PC-3 (cell line): ENCODE measurements at regions of chrX and their contacts with region 1.

Region 1: GRCh38 chrX:88526385-88526784 is 220.6 kb upstream of the CPXCR1 start:
- DNase-seq: peak; percentile 36
- ATAC-seq: peak; percentile 75
- H3K4me3 ChIP-seq: no peak overlapping the region
- H3K27ac ChIP-seq: no peak overlapping the region
- H3K4me1 ChIP-seq: no peaks in the 10 kb centered on the region
- H3K27me3 ChIP-seq: no peaks in the 10 kb centered on the region
- CTCF ChIP-seq: no peak

Region 2: GRCh38 chrX:88425739-88426138 is 100.6 kb before region 1 on chrX:
- CTCF ChIA-PET with region 1: no interaction called
- POLR2A ChIA-PET with region 1: no interaction called
- intact Hi-C with region 1: no loop called
- DNase-seq: peak; percentile 53
- ATAC-seq: peak; percentile 58
- H3K4me3 ChIP-seq: peak overlapping the region; percentile 71
- H3K27ac ChIP-seq: peak overlapping the region; percentile 30; the same call in 1 of the 2 replicates
- H3K4me1 ChIP-seq: no peaks in the 10 kb centered on the region
- H3K27me3 ChIP-seq: no peaks in the 10 kb centered on the region
- CTCF ChIP-seq: peak; percentile 68

Region 3: GRCh38 chrX:88584283-88584682 is 57.9 kb after region 1 on chrX:
- CTCF ChIA-PET with region 1: no interaction called
- POLR2A ChIA-PET with region 1: no interaction called
- intact Hi-C with region 1: no loop called
- DNase-seq: no peak
- ATAC-seq: no peak
- H3K4me3 ChIP-seq: no peak overlapping the region
- H3K27ac ChIP-seq: no peak overlapping the region
- H3K4me1 ChIP-seq: no peaks in the 10 kb centered on the region
- H3K27me3 ChIP-seq: no peaks in the 10 kb centered on the region
- CTCF ChIP-seq: no peak

Region 4: GRCh38 chrX:88604433-88605221 is 78.2 kb after region 1 on chrX:
- CTCF ChIA-PET with region 1: no interaction called
- POLR2A ChIA-PET with region 1: no interaction called
- intact Hi-C with region 1: loop called (anchors 1 kb)
- DNase-seq: peak; percentile 77
- ATAC-seq: peak; percentile 85
- H3K4me3 ChIP-seq: peak overlapping the region; percentile 41; the same call in 1 of the 2 replicates
- H3K27ac ChIP-seq: peak overlapping the region; percentile 97
- H3K4me1 ChIP-seq: peaks cover 30% of the 10 kb centered on the region
- H3K27me3 ChIP-seq: no peaks in the 10 kb centered on the region
- CTCF ChIP-seq: no peak